IMR-90 (cell line): ENCODE measurements at regions of chr13 and their contacts with region 1.

Region 1: DNA sequence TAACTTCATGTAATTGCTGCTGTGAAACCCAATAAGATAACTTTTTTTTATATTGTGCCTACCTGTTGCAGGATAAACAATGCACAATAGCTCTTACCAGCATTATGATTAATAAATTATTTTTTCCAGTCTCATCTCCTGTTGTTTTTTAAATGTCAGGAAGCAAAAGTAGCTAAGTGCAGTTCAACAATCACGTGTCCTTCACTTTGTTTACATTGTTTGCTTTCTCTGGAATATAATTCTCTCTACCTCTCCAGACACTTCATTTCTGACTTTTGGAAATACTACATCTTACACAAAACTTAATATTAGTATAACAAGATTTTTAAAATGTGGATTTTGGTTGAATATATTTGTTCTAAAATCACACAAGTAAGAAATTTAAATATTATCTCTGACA is 1359.4 kb downstream of the SLITRK1 start:
- DNase-seq: no peak
- ATAC-seq: no peak
- H3K4me3 ChIP-seq: no peak overlapping the region
- H3K27ac ChIP-seq: no peak overlapping the region
- H3K4me1 ChIP-seq: no peaks in the 10 kb centered on the region
- H3K27me3 ChIP-seq: no peaks in the 10 kb centered on the region
- CTCF ChIP-seq: no peak
- POLR2A ChIP-seq: no peak
- RAD21 ChIP-seq: no peak

Region 2: DNA sequence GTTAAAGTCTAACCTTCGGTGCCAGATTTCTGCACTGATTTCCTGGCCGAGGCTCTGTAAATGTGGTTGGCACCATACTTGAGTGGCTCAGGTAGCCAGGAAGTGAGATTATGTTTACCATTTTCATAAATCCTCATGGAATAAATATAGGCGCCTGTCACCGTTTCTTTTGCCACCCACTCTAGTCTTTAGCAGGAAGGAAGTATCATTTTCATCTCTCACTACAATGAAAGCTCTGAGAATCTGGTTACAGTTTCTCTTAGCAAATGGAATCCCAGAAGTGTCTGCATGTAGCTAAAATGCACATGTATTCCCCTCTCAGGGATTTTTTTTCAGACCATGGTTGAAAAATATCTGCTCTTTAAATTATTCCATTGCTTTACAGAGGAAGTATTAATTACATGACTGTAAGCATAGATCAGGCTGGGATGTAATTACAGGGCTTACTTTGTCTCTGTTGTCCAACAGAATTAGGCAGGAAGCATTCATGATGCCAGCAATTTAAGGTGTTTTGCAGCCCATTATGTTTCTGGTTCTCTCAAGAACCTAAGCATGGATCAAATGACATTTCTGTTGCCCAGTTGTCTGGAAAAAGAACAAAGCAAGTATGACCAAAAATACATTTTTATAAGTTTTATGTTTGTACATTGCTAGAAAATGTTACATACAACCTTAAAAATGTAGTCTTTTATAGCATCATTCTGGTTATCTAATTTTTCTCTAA is 1960.3 kb before region 1 on chr13:
- CTCF ChIA-PET with region 1: no interaction called
- POLR2A ChIA-PET with region 1: no interaction called
- dilution Hi-C with region 1: no loop called
- in situ Hi-C with region 1: no loop called
- intact Hi-C with region 1: no loop called
- DNase-seq: no peak
- ATAC-seq: no peak
- H3K4me3 ChIP-seq: no peak overlapping the region
- H3K27ac ChIP-seq: no peak overlapping the region
- H3K4me1 ChIP-seq: no peaks in the 10 kb centered on the region
- H3K27me3 ChIP-seq: no peaks in the 10 kb centered on the region
- CTCF ChIP-seq: no peak
- POLR2A ChIP-seq: no peak
- RAD21 ChIP-seq: no peak

Region 3: DNA sequence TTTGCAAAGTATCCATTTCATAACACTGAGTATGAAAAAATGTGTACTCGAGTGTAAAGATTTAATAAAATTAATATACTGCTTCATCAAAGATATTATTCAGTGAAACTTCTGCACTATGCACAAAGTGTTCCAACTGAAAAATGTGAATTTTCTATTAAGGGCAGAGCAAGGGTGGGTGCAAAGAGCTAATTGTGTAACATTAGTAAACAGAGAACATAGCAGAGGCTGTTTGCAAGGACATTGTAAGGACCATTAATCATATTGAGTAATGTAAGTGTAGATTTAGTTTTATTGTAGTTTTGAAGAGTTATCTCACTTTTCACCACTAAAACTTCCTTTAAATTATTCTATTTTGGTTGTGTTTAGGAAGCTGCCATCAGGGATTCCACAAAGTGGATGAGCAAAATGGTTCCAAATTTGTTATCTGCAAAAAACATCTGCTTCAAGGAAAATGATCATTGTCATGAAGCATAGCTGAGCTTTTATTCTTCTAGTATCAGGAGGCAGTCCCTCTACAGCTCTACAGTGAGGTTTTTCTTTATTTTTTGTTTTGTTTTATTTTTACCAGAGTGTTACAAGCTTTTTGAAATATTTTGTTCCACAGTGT is 16.0 kb before region 1 on chr13:
- CTCF ChIA-PET with region 1: interaction called, 4 read pairs
- POLR2A ChIA-PET with region 1: no interaction called
- dilution Hi-C with region 1: no loop called
- in situ Hi-C with region 1: no loop called
- intact Hi-C with region 1: loop called (anchors 1 kb)
- DNase-seq: no peak
- ATAC-seq: no peak
- H3K4me3 ChIP-seq: no peak overlapping the region
- H3K27ac ChIP-seq: no peak overlapping the region
- H3K4me1 ChIP-seq: no peaks in the 10 kb centered on the region
- H3K27me3 ChIP-seq: no peaks in the 10 kb centered on the region
- CTCF ChIP-seq: no peak
- POLR2A ChIP-seq: no peak
- RAD21 ChIP-seq: no peak